Heart left ventricle (tissue), 16 donors: ENCODE measurements at regions of chr3 and their contacts with region 1.

Region 1: DNA sequence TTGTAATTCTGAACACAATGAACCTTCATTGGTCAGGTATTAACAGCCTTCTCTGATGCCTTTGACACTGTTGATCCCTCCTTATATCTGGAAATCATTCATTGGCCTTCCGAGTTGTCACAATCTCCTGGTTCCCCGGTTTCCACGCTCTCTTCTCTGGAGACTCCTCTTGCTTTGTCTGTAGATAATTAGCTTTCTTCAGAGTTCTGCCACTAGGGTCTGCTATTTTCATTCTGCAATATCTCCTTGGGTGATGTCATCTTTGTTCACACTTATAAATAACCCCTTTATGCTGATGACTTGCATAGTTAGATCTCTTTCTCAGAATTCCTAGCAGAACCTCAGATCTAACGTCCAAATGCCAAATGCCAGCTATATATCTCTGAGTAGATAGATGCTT is 583.8 kb upstream of the ZNF717 start:
- DNase-seq: no peak
- ATAC-seq: peak in 3 of 4 donors; percentile 42 to 58 (median 54)
- H3K4me3 ChIP-seq: no peak overlapping the region
- H3K27ac ChIP-seq: no peak overlapping the region
- H3K4me1 ChIP-seq: no peaks in the 10 kb centered on the region
- H3K27me3 ChIP-seq: no peaks in the 10 kb centered on the region
- CTCF ChIP-seq: peak in 7 of 12 donors; percentile 8 to 33 (median 19)
- POLR2A ChIP-seq: no peak

Region 2: GRCh38 chr3:76152028-76152427 is 217.2 kb before region 1 on chr3:
- intact Hi-C with region 1: no loop called
- DNase-seq: no peak
- ATAC-seq: no peak
- H3K4me3 ChIP-seq: no peak overlapping the region
- H3K27ac ChIP-seq: no peak overlapping the region
- H3K4me1 ChIP-seq: no peaks in the 10 kb centered on the region
- H3K27me3 ChIP-seq: no peaks in the 10 kb centered on the region
- CTCF ChIP-seq: no peak
- POLR2A ChIP-seq: no peak

Region 3: GRCh38 chr3:76561494-76562236 is 192.5 kb after region 1 on chr3:
- intact Hi-C with region 1: loop called in 1 of 10 experiments (anchors 5 kb)
- DNase-seq: no peak
- ATAC-seq: no peak
- H3K4me3 ChIP-seq: no peak overlapping the region
- H3K27ac ChIP-seq: no peak overlapping the region
- H3K4me1 ChIP-seq: peaks cover 0 to 6% (median 0%) of the 10 kb centered on the region in 12 donors
- H3K27me3 ChIP-seq: no peaks in the 10 kb centered on the region
- CTCF ChIP-seq: no peak
- POLR2A ChIP-seq: no peak

Region 4: DNA sequence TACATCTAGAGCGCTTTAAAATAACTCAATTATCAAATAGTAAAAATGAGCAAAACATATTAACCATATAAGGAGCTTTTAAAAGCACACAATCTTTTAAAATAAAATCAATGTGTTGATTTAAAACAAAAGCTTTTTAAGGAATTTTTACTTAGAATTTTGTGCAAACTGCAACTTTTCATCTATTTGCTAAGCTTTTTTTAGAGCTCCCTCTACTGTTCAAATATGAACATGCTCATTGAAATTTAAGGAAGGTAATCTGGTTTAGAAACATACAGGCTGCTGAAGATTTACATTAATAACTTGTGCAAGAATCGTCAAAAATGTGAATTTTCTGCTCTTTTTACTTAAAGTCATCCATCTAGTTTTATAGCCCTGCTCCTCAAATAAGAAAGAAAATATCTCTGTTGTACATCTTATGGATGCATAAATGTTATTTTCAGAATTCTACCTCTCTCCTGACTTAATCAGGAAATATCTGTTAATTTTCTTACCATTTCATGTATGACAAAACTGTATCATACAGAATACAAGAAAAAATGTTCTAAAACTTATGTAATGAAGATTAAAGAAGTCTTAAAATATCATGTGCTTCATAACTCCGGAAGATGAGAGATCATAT is 201.4 kb after region 1 on chr3:
- intact Hi-C with region 1: loop called in 3 of 10 experiments (anchors 5 to 10 kb)
- DNase-seq: no peak
- ATAC-seq: no peak
- H3K4me3 ChIP-seq: no peak overlapping the region
- H3K27ac ChIP-seq: no peak overlapping the region
- H3K4me1 ChIP-seq: peaks cover 0 to 6% (median 0%) of the 10 kb centered on the region in 12 donors
- H3K27me3 ChIP-seq: no peaks in the 10 kb centered on the region
- CTCF ChIP-seq: peak; percentile 36 to 71 (median 50)
- POLR2A ChIP-seq: no peak

Region 5: GRCh38 chr3:76585794-76586392 is 216.7 kb after region 1 on chr3:
- intact Hi-C with region 1: loop called in 4 of 10 experiments (anchors 5 to 10 kb)
- DNase-seq: no peak
- ATAC-seq: no peak
- H3K4me3 ChIP-seq: no peak overlapping the region
- H3K27ac ChIP-seq: no peak overlapping the region
- H3K4me1 ChIP-seq: peaks cover 0 to 10% (median 0%) of the 10 kb centered on the region in 12 donors
- H3K27me3 ChIP-seq: no peaks in the 10 kb centered on the region
- CTCF ChIP-seq: peak; percentile 29 to 60 (median 48)
- POLR2A ChIP-seq: no peak

Region 6: GRCh38 chr3:76646921-76647562 is 277.9 kb after region 1 on chr3:
- intact Hi-C with region 1: no loop called
- DNase-seq: no peak
- ATAC-seq: no peak
- H3K4me3 ChIP-seq: no peak overlapping the region
- H3K27ac ChIP-seq: no peak overlapping the region
- H3K4me1 ChIP-seq: no peaks in the 10 kb centered on the region
- H3K27me3 ChIP-seq: no peaks in the 10 kb centered on the region
- CTCF ChIP-seq: peak in 1 of 12 donors; percentile 8
- POLR2A ChIP-seq: no peak